ENCODE measurements at regions of chr20 and their contacts with region 1.

Region 1: DNA sequence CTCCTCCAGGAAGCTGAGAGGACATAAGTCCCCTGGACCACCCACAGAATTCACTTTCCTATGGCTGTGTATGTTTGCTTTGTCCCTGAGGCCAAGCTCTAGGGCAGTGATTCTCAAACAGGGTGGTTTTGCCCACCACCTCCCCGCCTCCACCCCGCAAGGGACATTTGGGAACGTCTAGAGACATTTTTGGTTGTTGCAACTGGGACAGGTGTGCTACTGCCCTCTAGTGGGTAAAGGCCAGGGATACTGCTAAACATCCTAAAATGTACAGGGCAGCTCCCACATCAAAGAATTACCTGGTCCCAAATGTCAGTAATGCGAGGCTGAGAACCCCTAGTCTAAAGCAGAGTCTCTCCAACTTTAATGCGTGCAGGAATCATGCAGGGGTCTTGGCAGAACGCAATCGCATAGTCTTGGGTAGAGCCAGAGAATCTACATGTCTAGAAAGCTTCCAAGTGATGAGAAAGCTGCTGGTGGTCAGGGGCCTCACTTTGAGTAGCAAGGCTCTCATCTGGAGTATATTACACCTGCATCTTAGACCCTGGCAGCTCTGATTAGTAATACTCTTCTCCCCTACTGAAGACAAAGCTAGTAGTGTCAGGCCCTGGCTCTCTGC is 5.1 kb downstream of the KCNS1 start:
- DNase-seq: no peak
- ATAC-seq: peak; percentile 15

Region 2: DNA sequence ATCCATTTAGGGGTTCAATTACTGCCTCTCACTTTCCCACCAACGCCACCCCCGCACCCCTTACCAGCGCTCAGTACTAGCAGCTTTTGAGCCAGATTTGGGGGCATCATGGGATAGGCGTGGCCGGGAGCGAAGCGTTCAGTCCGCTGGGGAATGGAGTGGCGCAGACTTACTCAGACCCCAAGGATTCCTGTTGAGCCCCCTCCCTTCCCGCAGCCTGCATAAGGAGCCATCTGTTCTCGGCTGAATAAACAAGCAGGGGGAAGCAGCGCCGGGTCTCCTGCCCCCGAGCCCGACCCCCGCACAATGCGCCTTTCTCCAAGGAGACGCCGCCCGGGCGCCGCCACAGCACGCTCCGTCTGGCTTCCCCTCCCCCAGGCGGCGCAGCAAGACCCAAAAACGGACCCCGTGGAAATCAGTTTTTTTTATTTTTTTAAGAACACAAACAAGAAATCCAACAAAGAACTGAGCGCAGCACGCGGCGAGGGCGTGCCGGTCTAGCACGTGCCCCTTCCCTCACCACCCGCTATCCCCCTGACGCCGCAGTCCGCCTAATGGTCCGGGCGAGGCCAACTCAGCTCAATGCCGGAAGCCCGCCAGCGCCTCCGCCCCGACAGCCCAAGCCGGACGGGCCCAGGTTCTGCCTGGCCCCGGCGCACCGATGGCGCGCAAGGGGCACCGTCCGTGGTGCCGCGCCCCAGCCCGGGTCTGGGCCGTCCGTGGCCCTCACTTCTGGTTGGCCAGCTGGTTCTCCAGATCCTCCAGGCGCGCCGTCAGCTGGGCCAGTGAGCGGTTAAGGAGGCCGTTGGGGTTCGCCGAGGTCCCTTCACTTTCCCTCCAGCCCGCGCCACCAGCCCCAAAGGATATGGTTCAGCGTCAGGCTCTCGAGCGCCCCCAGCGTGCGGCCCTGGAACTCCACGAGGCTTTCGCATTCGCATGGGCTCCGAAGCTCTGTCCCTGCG is 197.5 kb after region 1 on chr20:
- intact Hi-C with region 1: loop called (anchors 2 kb)
- DNase-seq: peak; percentile 92
- ATAC-seq: peak; percentile 88